SK-N-SH (cell line): ENCODE measurements at regions of chr1 and their contacts with region 1.

Region 1: GRCh38 chr1:160193091-160193819 is 2.9 kb downstream of the CASQ1 start:
- DNase-seq: peak; percentile 80
- H3K4me3 ChIP-seq: peak overlapping the region in 1 of 2 experiments; percentile 25; a peak in 1 of 4 replicates
- H3K27ac ChIP-seq: peak overlapping the region in 1 of 2 experiments; percentile 11; a peak in 1 of 4 replicates
- H3K4me1 ChIP-seq: peaks cover 3 to 5% of the 10 kb centered on the region in 2 experiments; a peak in 2 of 4 replicates
- H3K27me3 ChIP-seq: no peaks in the 10 kb centered on the region
- CTCF ChIP-seq: peak; percentile 96
- EP300 ChIP-seq: peak in 1 of 2 experiments; percentile 22; a peak in 1 of 4 replicates
- RAD21 ChIP-seq: peak; percentile 98

Region 2: GRCh38 chr1:160108888-160109662 is 84.2 kb before region 1 on chr1:
- CTCF ChIA-PET with region 1: interaction called, 61 read pairs
- POLR2A ChIA-PET with region 1: no interaction called
- DNase-seq: peak; percentile 63
- H3K4me3 ChIP-seq: no peak overlapping the region
- H3K27ac ChIP-seq: no peak overlapping the region
- H3K4me1 ChIP-seq: peaks cover 0 to 9% of the 10 kb centered on the region in 2 experiments; a peak in 1 of 4 replicates
- H3K27me3 ChIP-seq: 0 out of 2 replicates have a peak, but pooled peaks cover 3% of the 10 kb centered on the region
- CTCF ChIP-seq: peak; percentile 64
- EP300 ChIP-seq: no peak
- RAD21 ChIP-seq: no peak

Region 3: GRCh38 chr1:160177231-160177630 is 16.0 kb before region 1 on chr1:
- CTCF ChIA-PET with region 1: interaction called, 11 read pairs
- POLR2A ChIA-PET with region 1: no interaction called
- DNase-seq: no peak
- H3K4me3 ChIP-seq: no peak overlapping the region
- H3K27ac ChIP-seq: no peak overlapping the region
- H3K4me1 ChIP-seq: no peaks in the 10 kb centered on the region
- H3K27me3 ChIP-seq: no peaks in the 10 kb centered on the region; the same call in 1 of the 2 replicates
- CTCF ChIP-seq: no peak
- EP300 ChIP-seq: no peak
- RAD21 ChIP-seq: no peak

Region 4: DNA sequence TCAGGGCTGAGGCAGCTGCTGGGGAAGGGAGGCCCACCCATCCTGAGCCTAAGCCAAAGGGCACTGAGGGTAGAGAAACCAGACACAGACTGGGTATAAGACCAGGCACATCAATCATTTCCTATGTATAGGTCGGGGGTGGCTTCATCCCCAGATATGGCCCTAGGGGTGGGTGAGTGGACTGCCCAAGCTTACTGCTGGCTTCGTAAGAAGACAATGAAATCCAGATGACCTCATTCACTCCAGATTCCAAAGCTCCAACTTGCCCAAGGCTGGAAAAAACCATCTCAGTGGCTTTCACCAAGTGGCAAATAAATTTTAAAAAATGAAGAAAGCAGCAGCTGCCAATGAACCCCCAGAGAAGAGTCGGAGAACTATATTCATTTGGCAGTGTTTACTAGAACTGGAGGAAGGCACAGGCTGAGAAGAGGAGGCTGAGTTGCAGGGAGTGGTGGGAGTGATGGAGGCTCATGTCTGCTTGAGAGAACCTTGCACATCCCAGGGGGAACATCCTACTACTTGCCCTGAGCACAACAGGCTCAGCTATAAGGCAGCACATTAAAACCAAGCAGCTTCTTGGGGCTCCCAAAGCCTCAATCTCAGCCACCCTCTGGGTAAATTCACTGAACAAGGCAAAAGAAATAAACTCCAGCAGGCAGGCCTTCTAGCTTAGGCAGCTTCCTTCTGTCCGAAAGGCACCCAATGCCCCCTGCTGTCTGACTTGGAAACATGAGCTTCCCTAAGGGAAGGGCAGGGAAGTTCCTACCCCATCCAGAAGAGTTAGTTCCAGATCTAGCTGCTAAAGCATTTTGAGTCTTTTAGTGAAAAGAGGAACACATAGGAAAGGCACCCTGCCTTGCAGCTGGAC is 26.0 kb after region 1 on chr1:
- CTCF ChIA-PET with region 1: interaction called, 141 read pairs
- POLR2A ChIA-PET with region 1: interaction called, 3 read pairs
- DNase-seq: peak; percentile 55
- H3K4me3 ChIP-seq: no peak overlapping the region; a peak in 1 of 4 replicates
- H3K27ac ChIP-seq: peak overlapping the region; percentile 31 to 55
- H3K4me1 ChIP-seq: peaks cover 11 to 18% of the 10 kb centered on the region in 2 experiments; a peak in 3 of 4 replicates
- H3K27me3 ChIP-seq: no peaks in the 10 kb centered on the region
- CTCF ChIP-seq: peak; percentile 72
- EP300 ChIP-seq: no peak
- RAD21 ChIP-seq: peak; percentile 81

Region 5: DNA sequence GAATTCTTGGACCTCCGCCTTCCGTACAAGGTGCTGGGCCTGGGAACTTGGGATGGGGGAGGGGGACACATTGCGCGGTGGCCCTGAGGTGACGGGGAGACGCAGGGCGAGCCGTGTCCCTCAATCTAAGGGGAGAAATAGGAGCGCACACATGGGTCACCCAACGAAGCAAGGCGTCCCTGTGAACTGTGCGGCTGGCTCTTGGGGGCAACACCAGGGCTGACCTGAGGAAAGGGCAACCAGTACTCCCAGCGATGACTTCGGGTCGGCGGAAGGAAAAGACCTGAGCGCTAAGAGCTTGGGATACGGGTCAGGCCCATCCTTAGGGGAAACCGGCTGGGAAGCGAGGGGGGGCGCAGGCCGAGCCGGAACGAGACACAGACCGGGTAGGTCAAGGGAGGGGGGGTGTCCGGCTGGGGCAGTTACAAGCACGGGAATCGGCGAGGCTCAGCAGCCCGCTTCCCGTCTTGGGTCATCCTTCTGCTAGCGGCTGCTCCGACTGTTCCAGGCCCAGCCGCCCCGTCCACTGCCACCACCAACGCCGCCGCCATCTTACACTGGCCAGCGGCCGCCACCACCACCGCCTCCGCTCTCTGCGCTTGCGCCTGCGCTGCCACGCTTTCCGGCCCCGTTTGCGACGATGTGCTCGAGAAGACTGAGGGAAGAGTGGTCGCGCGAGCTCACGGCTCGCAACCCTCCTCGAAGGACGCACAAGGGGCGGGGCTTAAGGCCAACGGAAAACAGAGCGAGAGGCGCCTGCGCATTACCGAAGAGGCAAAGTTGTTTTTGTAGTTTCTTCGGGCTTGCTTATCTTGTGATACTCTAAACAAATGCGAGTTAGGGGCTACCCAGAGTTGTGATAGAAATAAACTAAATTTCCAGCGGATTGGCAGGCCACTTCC is 68.9 kb after region 1 on chr1 and contains the start of gene DCAF8:
- CTCF ChIA-PET with region 1: interaction called, 293 read pairs
- POLR2A ChIA-PET with region 1: interaction called, 3 read pairs
- DNase-seq: peak; percentile 94
- H3K4me3 ChIP-seq: peak within 1 kb of the TSS; percentile 93 to 95
- H3K27ac ChIP-seq: peak within 1 kb of the TSS; percentile 96
- H3K4me1 ChIP-seq: peaks cover 12 to 18% of the 10 kb centered on the region in 2 experiments
- H3K27me3 ChIP-seq: no peaks in the 10 kb centered on the region
- CTCF ChIP-seq: no peak
- EP300 ChIP-seq: no peak
- RAD21 ChIP-seq: no peak
- polyA plus RNA-seq, gene DCAF8: 108 and 150 TPM in 2 replicates